ENCODE measurements at regions of chr3 and their contacts with region 1.

Region 1: DNA sequence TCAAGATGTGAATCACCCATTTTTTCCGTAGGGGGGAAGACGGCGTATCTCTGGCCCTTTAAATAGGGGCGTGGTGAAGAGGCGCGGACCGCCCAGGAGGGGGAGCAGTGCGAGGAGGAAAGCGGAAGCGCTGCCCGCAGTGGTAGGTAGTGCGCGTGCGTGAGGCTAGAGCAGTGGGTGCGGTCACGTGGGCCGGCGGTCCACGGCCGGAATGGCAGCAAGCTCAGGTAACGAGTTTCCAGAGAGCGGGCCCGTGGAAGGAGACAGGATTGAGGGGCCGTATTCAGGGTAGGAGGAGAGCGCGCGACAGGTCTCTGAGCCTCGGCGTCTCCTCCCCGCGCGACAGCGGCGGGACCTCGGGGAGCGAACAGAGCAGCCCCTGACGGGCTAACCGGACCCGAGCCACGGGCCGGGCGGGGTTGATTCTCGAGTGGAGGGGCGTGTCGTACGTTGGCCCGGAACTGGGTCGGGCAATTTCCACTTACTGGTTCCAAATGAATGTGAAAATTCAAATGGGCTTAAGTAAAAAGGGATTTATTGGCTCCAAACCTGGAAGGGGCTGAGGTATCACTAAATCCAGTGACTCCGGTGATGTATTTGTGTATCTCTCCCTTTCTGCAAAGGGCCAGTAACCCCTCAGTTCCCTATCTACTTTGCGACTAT is at the start of gene VPS8:
- DNase-seq: peak; percentile 91
- H3K4me3 ChIP-seq: peak within 1 kb of the TSS; percentile 82
- H3K27ac ChIP-seq: no peak within 1 kb of the TSS
- H3K27me3 ChIP-seq: no peaks in the 10 kb centered on the region
- CTCF ChIP-seq: peak; percentile 52
- polyA plus RNA-seq, gene VPS8: 33.4 and 40.6 TPM in 2 replicates

Region 2: GRCh38 chr3:184786280-184786941 is 25.7 kb before region 1 on chr3:
- CTCF ChIA-PET with region 1: interaction called, 20 read pairs
- POLR2A ChIA-PET with region 1: interaction called, 3 read pairs
- DNase-seq: peak; percentile 74
- H3K4me3 ChIP-seq: peak overlapping the region; percentile 27
- H3K27ac ChIP-seq: peak overlapping the region; percentile 93
- H3K27me3 ChIP-seq: no peaks in the 10 kb centered on the region
- CTCF ChIP-seq: no peak

Region 3: GRCh38 chr3:184800349-184800930 is 11.7 kb before region 1 on chr3:
- CTCF ChIA-PET with region 1: interaction called, 21 read pairs
- POLR2A ChIA-PET with region 1: no interaction called
- DNase-seq: no peak
- H3K4me3 ChIP-seq: no peak overlapping the region
- H3K27ac ChIP-seq: no peak overlapping the region
- H3K27me3 ChIP-seq: peaks cover 6% of the 10 kb centered on the region
- CTCF ChIP-seq: no peak

Region 4: DNA sequence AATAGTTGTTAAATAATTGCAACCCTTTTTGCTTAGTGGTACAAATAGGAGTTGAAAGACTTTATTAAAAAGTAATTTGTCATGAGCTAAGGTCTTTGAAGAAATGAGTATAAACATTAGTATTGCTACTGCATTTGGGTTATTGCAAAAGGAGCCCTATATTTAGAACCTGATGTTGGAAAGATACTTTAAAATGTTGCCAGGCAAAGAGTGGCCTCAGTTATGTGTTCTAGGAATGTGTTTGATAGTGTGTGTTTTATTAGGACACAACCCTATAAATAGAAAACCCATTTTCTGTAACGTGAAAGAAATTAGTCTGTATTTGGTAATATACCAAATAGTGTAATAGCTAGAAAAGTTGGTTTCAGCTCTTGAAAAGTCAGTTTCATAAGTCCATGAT is 10.5 kb after region 1 on chr3:
- CTCF ChIA-PET with region 1: interaction called, 27 read pairs
- POLR2A ChIA-PET with region 1: interaction called, 7 read pairs
- DNase-seq: no peak
- H3K4me3 ChIP-seq: no peak overlapping the region
- H3K27ac ChIP-seq: no peak overlapping the region
- H3K27me3 ChIP-seq: no peaks in the 10 kb centered on the region
- CTCF ChIP-seq: no peak

Region 5: DNA sequence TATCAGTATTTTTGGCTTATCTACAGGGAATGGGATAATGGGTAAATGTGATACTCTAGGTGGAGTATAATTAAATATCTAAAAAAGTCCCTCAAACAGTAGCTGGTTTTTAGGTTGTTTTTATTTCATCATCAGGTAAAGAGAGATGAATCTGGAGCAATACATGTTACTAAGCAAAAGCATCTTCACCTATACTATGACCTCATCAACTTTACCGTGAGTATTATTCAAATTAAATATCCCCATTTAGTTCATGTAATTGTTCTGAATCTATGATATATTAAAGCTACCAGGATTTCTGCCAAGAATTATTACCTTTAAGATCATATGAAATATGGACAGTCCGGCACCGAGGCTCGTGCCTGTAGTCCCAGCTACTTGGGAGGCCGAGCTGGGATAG is 47.7 kb after region 1 on chr3:
- CTCF ChIA-PET with region 1: no interaction called
- POLR2A ChIA-PET with region 1: no interaction called
- DNase-seq: no peak
- H3K4me3 ChIP-seq: no peak overlapping the region
- H3K27ac ChIP-seq: no peak overlapping the region
- H3K27me3 ChIP-seq: no peaks in the 10 kb centered on the region
- CTCF ChIP-seq: no peak

Measured in AG04450 (cell line).